CD8-positive, alpha-beta memory T cell (primary cell): ENCODE measurements at regions of chr5 and their contacts with region 1.

Region 1: DNA sequence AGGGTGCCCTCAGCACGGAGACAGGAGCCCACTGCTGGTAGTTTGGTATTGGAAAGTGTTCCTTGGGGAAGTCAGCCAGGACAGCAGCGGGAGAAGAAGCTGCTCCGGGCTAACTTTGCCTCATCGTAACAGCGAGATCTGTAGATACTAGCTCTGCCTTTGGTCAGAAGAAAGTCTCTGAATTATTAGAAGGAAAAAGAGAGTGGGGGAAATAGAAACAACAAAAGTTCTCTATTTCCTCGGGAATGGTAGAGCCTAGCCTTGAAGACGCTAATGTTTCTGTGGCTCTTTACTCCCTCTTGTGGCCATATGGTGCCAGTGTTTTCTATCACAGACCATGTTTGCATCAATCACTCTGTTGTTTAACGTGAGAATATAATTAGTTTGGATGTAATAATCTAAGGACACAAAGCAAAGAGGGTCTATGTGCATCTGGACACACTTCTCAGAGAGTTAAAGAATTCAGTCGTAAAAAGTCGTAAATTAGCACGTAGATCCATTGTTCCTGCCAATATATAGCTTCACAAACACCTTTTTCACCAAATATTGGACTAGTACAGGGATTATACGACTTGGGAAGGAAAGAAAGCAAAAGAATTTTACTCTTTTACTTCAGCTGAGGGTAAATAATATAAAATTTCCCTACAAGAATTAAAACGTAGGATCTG is 40.2 kb upstream of the HSD17B4 start:
- DNase-seq: peak in 4 of 5 donors; percentile 45 to 67 (median 62)
- H3K4me3 ChIP-seq: peak overlapping the region; percentile 71
- H3K4me3 Mint-ChIP-seq: peak overlapping the region; percentile 22 to 88 (median 80)
- H3K27ac ChIP-seq: peak overlapping the region; percentile 34
- H3K27ac Mint-ChIP-seq: peak overlapping the region in 6 of 8 donors; percentile 30 to 80 (median 49)
- H3K4me1 ChIP-seq: peaks cover 9% of the 10 kb centered on the region
- H3K4me1 Mint-ChIP-seq: peaks cover 10 to 20% (median 14%) of the 10 kb centered on the region in 3 donors
- H3K27me3 ChIP-seq: no peaks in the 10 kb centered on the region
- H3K27me3 Mint-ChIP-seq: peaks cover 3 to 4% of the 10 kb centered on the region in 2 donors

Region 2: DNA sequence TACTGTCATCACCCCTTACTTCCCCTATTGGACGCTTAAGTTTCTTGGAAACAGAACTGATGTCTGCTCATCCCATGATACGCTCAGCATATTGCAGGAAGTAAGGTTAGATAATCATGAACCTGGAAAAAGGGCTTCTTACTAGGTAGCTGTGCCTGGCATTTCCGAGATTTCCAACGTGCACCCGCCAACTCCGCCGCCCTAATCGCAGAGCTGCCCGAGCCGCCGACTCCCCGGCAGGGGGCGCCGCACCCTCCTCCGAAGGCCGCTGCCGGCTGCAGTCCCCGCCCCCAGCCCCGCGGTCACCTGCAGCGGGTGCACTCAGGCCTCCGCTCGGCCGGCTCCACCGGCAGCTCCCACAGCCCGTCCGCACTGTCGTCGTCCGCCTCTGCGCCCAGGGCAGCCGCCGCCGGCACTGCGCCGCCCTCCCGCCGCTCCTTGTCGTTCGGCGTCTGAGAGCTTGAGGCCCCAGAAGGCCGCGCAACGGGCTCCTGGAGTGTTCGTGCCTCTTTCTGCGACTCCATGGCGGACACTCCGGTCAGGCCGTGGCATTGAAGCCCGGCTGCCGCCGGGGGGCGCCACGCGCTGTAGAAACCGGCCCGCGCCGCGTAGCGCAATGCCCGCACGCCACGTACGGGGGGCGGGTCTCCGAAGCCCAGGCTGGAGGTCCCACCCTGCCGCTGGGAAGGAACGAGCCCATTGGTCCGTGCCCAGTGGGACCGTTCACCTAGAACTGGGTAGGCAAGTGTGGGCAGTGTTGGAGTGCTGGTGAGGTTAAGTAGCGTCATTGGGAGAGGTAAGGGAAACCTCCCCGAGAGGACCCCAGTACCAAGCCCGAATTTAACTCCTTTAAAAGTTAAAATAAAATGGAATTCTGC is 423.8 kb before region 1 on chr5 and contains the start of gene DTWD2:
- CTCF ChIA-PET with region 1: interaction called, 67 read pairs
- POLR2A ChIA-PET with region 1: interaction called, 5 read pairs
- DNase-seq: peak; percentile 87 to 98 (median 91)
- H3K4me3 ChIP-seq: peak within 1 kb of the TSS; percentile 67
- H3K4me3 Mint-ChIP-seq: peak within 1 kb of the TSS; percentile 82 to 92 (median 85)
- H3K27ac ChIP-seq: peak within 1 kb of the TSS; percentile 76
- H3K27ac Mint-ChIP-seq: peak within 1 kb of the TSS; percentile 22 to 88 (median 73)
- H3K4me1 ChIP-seq: peaks cover 11% of the 10 kb centered on the region
- H3K4me1 Mint-ChIP-seq: peaks cover 16 to 21% (median 19%) of the 10 kb centered on the region in 3 donors
- H3K27me3 ChIP-seq: no peaks in the 10 kb centered on the region
- H3K27me3 Mint-ChIP-seq: no peaks in the 10 kb centered on the region
- total RNA-seq, gene DTWD2: 3.3 to 3.7 TPM

Region 3: GRCh38 chr5:119070828-119071572 is 341.1 kb before region 1 on chr5 and contains the start of gene DMXL1:
- CTCF ChIA-PET with region 1: interaction called, 15 read pairs
- POLR2A ChIA-PET with region 1: no interaction called
- DNase-seq: peak; percentile 96 to 99 (median 98)
- H3K4me3 ChIP-seq: peak within 1 kb of the TSS; percentile 68
- H3K4me3 Mint-ChIP-seq: peak within 1 kb of the TSS; percentile 91 to 100 (median 99)
- H3K27ac ChIP-seq: peak within 1 kb of the TSS; percentile 86
- H3K27ac Mint-ChIP-seq: peak within 1 kb of the TSS; percentile 92 to 100 (median 98)
- H3K4me1 ChIP-seq: peaks cover 31% of the 10 kb centered on the region
- H3K4me1 Mint-ChIP-seq: peaks cover 31 to 50% (median 50%) of the 10 kb centered on the region in 3 donors
- H3K27me3 ChIP-seq: no peaks in the 10 kb centered on the region
- H3K27me3 Mint-ChIP-seq: peaks cover 0 to 3% of the 10 kb centered on the region in 2 donors
- total RNA-seq, gene DMXL1: 25.9 to 26.2 TPM

Region 4: DNA sequence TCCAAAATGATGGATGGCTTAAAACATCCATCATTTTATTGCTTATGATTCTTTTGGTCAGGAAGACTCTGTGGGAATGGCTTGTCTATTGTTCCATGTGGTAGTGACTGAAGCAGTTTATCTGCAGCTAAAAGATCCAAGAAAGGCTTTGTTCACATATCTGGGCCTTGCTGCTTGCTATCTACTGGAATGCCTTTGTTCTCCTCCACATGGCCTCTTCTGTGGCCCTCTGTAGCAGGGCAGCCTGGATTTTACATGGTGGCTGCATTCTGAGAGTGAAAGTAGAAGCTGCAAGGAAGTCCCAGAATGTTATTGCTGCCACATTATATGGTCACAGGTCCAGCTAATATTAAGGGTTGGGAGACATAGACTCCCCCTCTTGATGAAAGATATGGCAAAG is 306.1 kb before region 1 on chr5:
- CTCF ChIA-PET with region 1: no interaction called
- POLR2A ChIA-PET with region 1: no interaction called
- DNase-seq: no peak
- H3K4me3 ChIP-seq: no peak overlapping the region
- H3K4me3 Mint-ChIP-seq: no peak overlapping the region
- H3K27ac ChIP-seq: no peak overlapping the region
- H3K27ac Mint-ChIP-seq: peak overlapping the region in 1 of 8 donors; percentile 2
- H3K4me1 ChIP-seq: no peaks in the 10 kb centered on the region
- H3K4me1 Mint-ChIP-seq: peaks cover 0 to 7% (median 0%) of the 10 kb centered on the region in 3 donors
- H3K27me3 ChIP-seq: no peaks in the 10 kb centered on the region
- H3K27me3 Mint-ChIP-seq: no peaks in the 10 kb centered on the region

Region 5: DNA sequence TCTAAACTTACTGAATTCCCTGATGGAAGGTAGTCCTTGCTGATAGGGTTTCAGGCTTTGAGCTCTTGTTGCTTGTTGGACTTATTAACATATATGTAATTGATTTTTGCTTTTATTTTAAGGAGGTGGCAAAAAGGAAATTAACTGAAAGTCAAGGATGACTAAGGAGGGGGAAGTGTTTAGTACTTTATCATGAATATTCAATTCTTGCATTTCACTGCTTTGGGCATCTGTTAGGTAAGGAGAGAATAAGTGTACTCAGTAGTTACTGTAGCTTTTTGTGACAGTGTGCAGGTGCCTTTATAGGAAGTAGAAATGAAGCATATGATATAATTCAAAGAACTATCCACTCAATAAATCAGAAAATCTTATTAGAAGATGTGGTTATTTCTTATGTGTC is 294.1 kb before region 1 on chr5:
- CTCF ChIA-PET with region 1: no interaction called
- POLR2A ChIA-PET with region 1: no interaction called
- DNase-seq: no peak
- H3K4me3 ChIP-seq: no peak overlapping the region
- H3K4me3 Mint-ChIP-seq: no peak overlapping the region
- H3K27ac ChIP-seq: no peak overlapping the region
- H3K27ac Mint-ChIP-seq: peak overlapping the region in 3 of 8 donors; percentile 44 to 66 (median 64)
- H3K4me1 ChIP-seq: no peaks in the 10 kb centered on the region
- H3K4me1 Mint-ChIP-seq: no peaks in the 10 kb centered on the region
- H3K27me3 ChIP-seq: no peaks in the 10 kb centered on the region
- H3K27me3 Mint-ChIP-seq: no peaks in the 10 kb centered on the region

Region 6: GRCh38 chr5:119274767-119275130 is 137.3 kb before region 1 on chr5:
- CTCF ChIA-PET with region 1: interaction called, 10 read pairs
- POLR2A ChIA-PET with region 1: interaction called, 3 read pairs
- DNase-seq: no peak
- H3K4me3 ChIP-seq: peak overlapping the region; percentile 76
- H3K4me3 Mint-ChIP-seq: peak overlapping the region; percentile 97 to 100 (median 98)
- H3K27ac ChIP-seq: peak overlapping the region; percentile 5
- H3K27ac Mint-ChIP-seq: peak overlapping the region; percentile 81 to 97 (median 95)
- H3K4me1 ChIP-seq: peaks cover 88% of the 10 kb centered on the region
- H3K4me1 Mint-ChIP-seq: peaks cover 89 to 100% (median 95%) of the 10 kb centered on the region in 3 donors
- H3K27me3 ChIP-seq: no peaks in the 10 kb centered on the region
- H3K27me3 Mint-ChIP-seq: peaks cover 0 to 6% of the 10 kb centered on the region in 2 donors

Region 7: GRCh38 chr5:119340597-119341218 is 71.4 kb before region 1 on chr5:
- CTCF ChIA-PET with region 1: interaction called, 24 read pairs
- POLR2A ChIA-PET with region 1: no interaction called
- DNase-seq: peak; percentile 26 to 77 (median 61)
- H3K4me3 ChIP-seq: peak overlapping the region; percentile 54
- H3K4me3 Mint-ChIP-seq: peak overlapping the region; percentile 75 to 93 (median 83)
- H3K27ac ChIP-seq: peak overlapping the region; percentile 52
- H3K27ac Mint-ChIP-seq: peak overlapping the region; percentile 84 to 99 (median 94)
- H3K4me1 ChIP-seq: peaks cover 98% of the 10 kb centered on the region
- H3K4me1 Mint-ChIP-seq: peaks cover 95 to 98% (median 98%) of the 10 kb centered on the region in 3 donors
- H3K27me3 ChIP-seq: no peaks in the 10 kb centered on the region
- H3K27me3 Mint-ChIP-seq: no peaks in the 10 kb centered on the region

Region 8: GRCh38 chr5:119400245-119400644 is 11.8 kb before region 1 on chr5:
- CTCF ChIA-PET with region 1: interaction called, 26 read pairs
- POLR2A ChIA-PET with region 1: interaction called, 3 read pairs
- DNase-seq: no peak
- H3K4me3 ChIP-seq: no peak overlapping the region
- H3K4me3 Mint-ChIP-seq: no peak overlapping the region
- H3K27ac ChIP-seq: no peak overlapping the region
- H3K27ac Mint-ChIP-seq: peak overlapping the region in 4 of 8 donors; percentile 2 to 93 (median 60)
- H3K4me1 ChIP-seq: peaks cover 18% of the 10 kb centered on the region
- H3K4me1 Mint-ChIP-seq: peaks cover 28 to 47% (median 41%) of the 10 kb centered on the region in 3 donors
- H3K27me3 ChIP-seq: no peaks in the 10 kb centered on the region
- H3K27me3 Mint-ChIP-seq: no peaks in the 10 kb centered on the region